IMR-90 (cell line): ENCODE measurements at regions of chr14 and their contacts with region 1.

Region 1: GRCh38 chr14:21383848-21384493 is at the start of gene SUPT16H:
- DNase-seq: peak; percentile 95
- ATAC-seq: peak; percentile 98
- H3K4me3 ChIP-seq: peak within 1 kb of the TSS; percentile 94
- H3K27ac ChIP-seq: peak within 1 kb of the TSS; percentile 67
- H3K4me1 ChIP-seq: no peaks in the 10 kb centered on the region
- H3K27me3 ChIP-seq: no peaks in the 10 kb centered on the region
- CTCF ChIP-seq: no peak
- POLR2A ChIP-seq: peak; percentile 68; the same call in 1 of the 2 replicates
- RAD21 ChIP-seq: no peak
- total RNA-seq, gene SUPT16H: 103 and 134 TPM in 2 replicates

Region 2: DNA sequence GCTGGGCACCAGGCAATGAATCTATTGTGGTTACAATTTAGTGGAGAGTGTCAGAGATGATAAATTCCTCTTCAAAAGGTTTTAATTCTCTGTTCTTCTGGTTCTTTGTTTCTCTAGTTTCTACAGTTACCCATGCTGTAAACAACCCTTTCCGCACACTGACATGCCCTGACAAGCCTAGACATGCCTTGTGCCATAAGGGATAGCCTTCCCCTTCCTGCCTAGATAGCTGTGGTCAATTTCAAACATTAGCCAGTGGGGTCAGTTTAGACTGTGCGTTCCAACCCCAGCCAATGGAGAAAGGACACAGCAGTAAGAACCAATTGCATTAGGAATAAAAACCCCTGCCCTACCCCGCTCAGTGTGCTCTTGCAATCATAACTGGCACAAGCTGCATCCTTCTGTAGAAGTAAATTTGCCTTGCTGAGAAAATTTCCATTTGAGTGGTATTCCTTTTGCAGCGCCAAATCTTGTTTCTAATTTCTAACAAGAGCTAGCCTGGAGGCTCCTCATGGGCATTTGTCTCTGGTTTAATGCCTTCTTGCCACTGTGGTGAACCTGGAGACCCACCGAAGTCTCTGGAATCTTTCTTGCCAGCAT is 631.9 kb before region 1 on chr14:
- CTCF ChIA-PET with region 1: no interaction called
- POLR2A ChIA-PET with region 1: no interaction called
- dilution Hi-C with region 1: no loop called
- in situ Hi-C with region 1: no loop called
- intact Hi-C with region 1: no loop called
- DNase-seq: no peak
- ATAC-seq: no peak
- H3K4me3 ChIP-seq: no peak overlapping the region
- H3K27ac ChIP-seq: no peak overlapping the region
- H3K4me1 ChIP-seq: no peaks in the 10 kb centered on the region
- H3K27me3 ChIP-seq: no peaks in the 10 kb centered on the region
- CTCF ChIP-seq: no peak
- POLR2A ChIP-seq: no peak
- RAD21 ChIP-seq: no peak

Region 3: GRCh38 chr14:21233457-21234076 is 150.4 kb before region 1 on chr14:
- CTCF ChIA-PET with region 1: no interaction called
- POLR2A ChIA-PET with region 1: no interaction called
- dilution Hi-C with region 1: no loop called
- in situ Hi-C with region 1: no loop called
- intact Hi-C with region 1: loop called (anchors 2 kb)
- DNase-seq: no peak
- ATAC-seq: no peak; the same call in 1 of the 2 replicates
- H3K4me3 ChIP-seq: no peak overlapping the region
- H3K27ac ChIP-seq: no peak overlapping the region
- H3K4me1 ChIP-seq: peaks cover 3% of the 10 kb centered on the region; the same call in 1 of the 2 replicates
- H3K27me3 ChIP-seq: no peaks in the 10 kb centered on the region
- CTCF ChIP-seq: no peak
- POLR2A ChIP-seq: no peak
- RAD21 ChIP-seq: no peak

Region 4: DNA sequence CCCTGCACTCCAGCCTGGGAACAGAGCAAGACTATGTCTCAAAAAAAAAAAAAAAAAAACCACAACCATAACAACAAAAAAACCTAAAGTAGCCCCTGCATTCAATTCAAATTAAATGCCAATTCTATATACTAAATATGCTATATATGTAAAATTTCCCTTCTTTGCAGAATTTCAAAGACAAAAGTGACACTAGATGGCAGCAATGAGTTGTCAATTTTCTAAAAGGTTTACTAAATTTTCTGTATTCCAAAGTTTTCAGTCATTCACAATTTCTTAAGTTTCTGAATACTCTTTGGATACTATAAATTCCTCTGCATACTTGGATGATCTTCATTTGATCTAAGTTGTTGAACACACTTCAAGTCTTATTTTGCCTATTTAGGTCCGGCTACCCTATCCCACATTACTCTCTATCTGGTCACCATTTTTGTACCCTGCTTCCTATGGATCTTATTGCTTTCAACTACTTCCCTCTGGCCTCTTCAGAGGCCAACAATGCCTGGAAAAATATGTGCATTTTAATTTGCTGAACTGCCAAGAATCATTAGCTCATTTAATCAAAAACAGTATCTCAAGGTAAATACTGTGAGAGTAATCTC is 142.7 kb before region 1 on chr14:
- CTCF ChIA-PET with region 1: no interaction called
- POLR2A ChIA-PET with region 1: no interaction called
- dilution Hi-C with region 1: no loop called
- in situ Hi-C with region 1: no loop called
- intact Hi-C with region 1: loop called (anchors 1 kb)
- DNase-seq: peak; percentile 38
- ATAC-seq: peak; percentile 8; the same call in 1 of the 2 replicates
- H3K4me3 ChIP-seq: no peak overlapping the region
- H3K27ac ChIP-seq: no peak overlapping the region
- H3K4me1 ChIP-seq: peaks cover 1% of the 10 kb centered on the region
- H3K27me3 ChIP-seq: no peaks in the 10 kb centered on the region
- CTCF ChIP-seq: peak; percentile 40
- POLR2A ChIP-seq: no peak
- RAD21 ChIP-seq: peak; percentile 25

Region 5: DNA sequence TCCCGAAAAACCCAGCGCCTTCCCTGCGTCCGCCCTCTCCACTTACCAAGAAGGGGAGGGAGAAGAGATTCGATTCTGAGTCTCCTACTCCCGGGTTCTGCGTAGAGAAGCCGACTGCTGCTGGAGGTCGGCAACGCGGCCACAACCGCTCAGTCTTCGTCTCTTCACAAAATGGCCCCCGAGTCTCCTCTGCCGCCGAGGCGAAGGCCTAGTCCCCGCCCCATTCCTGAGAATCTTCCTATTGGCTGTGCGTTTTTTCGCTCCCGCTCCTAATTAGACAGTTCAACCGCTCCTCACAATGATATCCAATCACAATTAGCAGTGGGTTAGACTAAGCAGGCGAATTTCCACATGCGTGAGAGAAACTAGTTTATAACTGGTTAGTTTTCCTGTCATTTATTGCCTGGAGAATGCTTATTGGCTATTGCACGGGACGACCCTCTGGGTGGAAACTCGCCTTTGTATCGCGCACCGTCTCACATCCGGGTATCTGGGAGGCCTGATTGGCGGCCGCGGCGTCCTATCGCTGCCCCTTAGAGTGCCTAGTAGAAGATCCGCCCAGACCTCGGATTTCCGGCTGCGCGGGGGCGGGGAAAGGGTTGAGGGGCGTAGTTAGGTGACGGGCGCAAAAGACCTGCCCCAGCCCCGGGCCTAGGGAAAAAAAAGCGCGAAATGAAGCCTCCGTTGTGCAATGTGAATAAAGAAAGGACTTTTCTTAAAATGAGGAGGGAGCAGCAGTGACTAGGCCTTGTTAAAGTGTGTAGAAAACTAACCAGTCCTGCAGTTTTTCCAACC is 114.5 kb before region 1 on chr14 and contains the start of gene HNRNPC:
- CTCF ChIA-PET with region 1: no interaction called
- POLR2A ChIA-PET with region 1: no interaction called
- dilution Hi-C with region 1: no loop called
- in situ Hi-C with region 1: no loop called
- intact Hi-C with region 1: loop called (anchors 5 kb)
- DNase-seq: peak; percentile 100
- ATAC-seq: peak; percentile 95
- H3K4me3 ChIP-seq: peak within 1 kb of the TSS; percentile 93
- H3K27ac ChIP-seq: peak within 1 kb of the TSS; percentile 84
- H3K4me1 ChIP-seq: peaks cover 7% of the 10 kb centered on the region
- H3K27me3 ChIP-seq: no peaks in the 10 kb centered on the region
- CTCF ChIP-seq: no peak
- POLR2A ChIP-seq: peak; percentile 99
- RAD21 ChIP-seq: no peak
- total RNA-seq, gene HNRNPC: 308 and 548 TPM in 2 replicates

Region 6: DNA sequence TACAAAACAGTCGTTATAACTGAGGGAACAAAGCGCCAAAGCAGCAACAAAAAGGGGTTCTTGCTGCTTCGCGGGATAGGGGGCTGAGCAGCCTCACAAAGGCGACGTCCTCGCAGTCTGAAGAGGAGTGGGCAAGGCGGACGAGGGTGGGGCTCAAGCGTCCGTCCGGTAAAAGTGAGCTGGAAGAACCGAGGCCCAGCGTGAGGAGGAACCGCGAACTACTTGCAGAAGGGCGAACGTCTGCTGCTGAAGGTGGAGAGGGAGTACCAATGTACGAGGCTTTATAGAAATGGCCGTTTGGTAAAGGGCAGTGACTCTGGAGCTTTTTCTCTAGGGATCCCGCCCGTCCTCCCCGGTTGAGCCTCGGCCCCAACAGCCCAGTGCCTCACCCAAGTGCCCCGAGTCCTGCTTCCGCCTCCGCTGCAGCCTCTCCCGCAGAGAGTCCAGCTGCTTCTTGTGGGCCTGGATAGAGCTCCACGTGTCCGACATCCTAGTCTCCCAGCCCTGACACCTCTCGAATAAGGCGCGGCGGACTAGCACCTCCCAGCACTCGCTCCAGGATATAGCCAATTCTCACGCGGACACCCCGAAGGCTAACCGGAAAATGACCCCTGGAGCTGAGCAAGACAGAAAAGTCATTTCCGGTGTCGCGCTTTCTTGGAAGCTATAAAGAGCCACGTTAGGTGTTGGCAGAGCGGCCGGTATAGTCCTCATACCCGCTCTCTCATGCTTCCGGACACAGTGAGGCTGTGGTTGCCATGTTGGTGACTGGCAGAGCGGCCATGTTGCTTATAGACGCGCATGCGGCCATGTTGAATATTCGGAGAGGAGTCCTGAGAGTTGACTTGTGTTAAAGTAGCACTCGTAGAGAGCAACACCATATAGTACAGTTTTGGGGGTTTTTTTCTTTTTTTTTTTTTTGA is 127.0 kb after region 1 on chr14 and contains the start of gene METTL3:
- CTCF ChIA-PET with region 1: no interaction called
- POLR2A ChIA-PET with region 1: no interaction called
- dilution Hi-C with region 1: no loop called
- in situ Hi-C with region 1: no loop called
- intact Hi-C with region 1: loop called (anchors 1 kb)
- DNase-seq: peak; percentile 99
- ATAC-seq: peak; percentile 99
- H3K4me3 ChIP-seq: peak within 1 kb of the TSS; percentile 68
- H3K27ac ChIP-seq: peak within 1 kb of the TSS; percentile 76
- H3K4me1 ChIP-seq: no peaks in the 10 kb centered on the region
- H3K27me3 ChIP-seq: no peaks in the 10 kb centered on the region
- CTCF ChIP-seq: no peak
- POLR2A ChIP-seq: peak; percentile 71; the same call in 1 of the 2 replicates
- RAD21 ChIP-seq: no peak
- total RNA-seq, gene METTL3: 68.9 and 109 TPM in 2 replicates